ENCODE measurements at regions of chr9 and their contacts with region 1.

Region 1: GRCh38 chr9:71397841-71398240 is 276.4 kb upstream of the TRPM3 start:
- DNase-seq: no peak
- H3K4me3 ChIP-seq: no peak overlapping the region
- H3K27ac ChIP-seq: no peak overlapping the region
- H3K4me1 ChIP-seq: no peaks in the 10 kb centered on the region
- H3K27me3 ChIP-seq: no peaks in the 10 kb centered on the region
- CTCF ChIP-seq: no peak
- POLR2A ChIP-seq: no peak

Region 2: DNA sequence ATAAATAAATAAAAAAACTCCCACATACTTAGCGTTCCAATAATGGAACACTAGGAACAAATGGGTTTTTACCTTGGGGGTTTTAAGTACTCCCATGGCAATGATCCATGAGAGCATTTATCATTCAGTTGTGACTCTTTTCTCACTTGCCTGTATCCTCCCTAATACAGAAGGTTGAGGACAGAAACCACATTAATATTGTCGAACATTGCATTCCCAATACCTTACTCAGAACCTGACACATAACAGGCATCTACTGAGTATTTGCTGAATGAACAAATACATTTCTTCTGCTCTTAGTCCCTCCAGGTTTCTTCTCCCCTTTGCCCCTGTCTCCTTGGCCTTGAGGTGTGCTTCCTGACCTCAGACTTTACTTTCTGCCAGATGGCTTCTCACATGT is 194.6 kb after region 1 on chr9:
- intact Hi-C with region 1: loop called (anchors 5 kb)
- DNase-seq: no peak
- H3K4me3 ChIP-seq: no peak overlapping the region
- H3K27ac ChIP-seq: no peak overlapping the region
- H3K4me1 ChIP-seq: no peaks in the 10 kb centered on the region
- H3K27me3 ChIP-seq: no peaks in the 10 kb centered on the region
- CTCF ChIP-seq: no peak
- POLR2A ChIP-seq: no peak